IMR-90 (cell line): ENCODE measurements at regions of chr1 and their contacts with region 1.

Region 1: GRCh38 chr1:172745014-172745413 is 86.1 kb downstream of the FASLG start:
- DNase-seq: peak; percentile 89
- ATAC-seq: peak; percentile 69
- H3K4me3 ChIP-seq: no peak overlapping the region
- H3K27ac ChIP-seq: no peak overlapping the region
- H3K4me1 ChIP-seq: peaks cover 7% of the 10 kb centered on the region
- H3K27me3 ChIP-seq: no peaks in the 10 kb centered on the region; the same call in 1 of the 2 replicates
- CTCF ChIP-seq: peak; percentile 85
- POLR2A ChIP-seq: peak; percentile 48; the same call in 1 of the 2 replicates
- RAD21 ChIP-seq: peak; percentile 94

Region 2: GRCh38 chr1:172708452-172708851 is 36.6 kb before region 1 on chr1:
- CTCF ChIA-PET with region 1: no interaction called
- POLR2A ChIA-PET with region 1: no interaction called
- dilution Hi-C with region 1: no loop called
- in situ Hi-C with region 1: no loop called
- intact Hi-C with region 1: no loop called
- DNase-seq: no peak
- ATAC-seq: no peak
- H3K4me3 ChIP-seq: no peak overlapping the region
- H3K27ac ChIP-seq: no peak overlapping the region
- H3K4me1 ChIP-seq: no peaks in the 10 kb centered on the region
- H3K27me3 ChIP-seq: no peaks in the 10 kb centered on the region
- CTCF ChIP-seq: no peak
- POLR2A ChIP-seq: no peak
- RAD21 ChIP-seq: no peak

Region 3: GRCh38 chr1:172835834-172836233 is 90.8 kb after region 1 on chr1:
- CTCF ChIA-PET with region 1: no interaction called
- POLR2A ChIA-PET with region 1: no interaction called
- dilution Hi-C with region 1: no loop called
- in situ Hi-C with region 1: no loop called
- intact Hi-C with region 1: no loop called
- DNase-seq: no peak
- ATAC-seq: no peak
- H3K4me3 ChIP-seq: no peak overlapping the region
- H3K27ac ChIP-seq: no peak overlapping the region
- H3K4me1 ChIP-seq: peaks cover 7% of the 10 kb centered on the region; the same call in 1 of the 2 replicates
- H3K27me3 ChIP-seq: no peaks in the 10 kb centered on the region
- CTCF ChIP-seq: no peak
- POLR2A ChIP-seq: no peak
- RAD21 ChIP-seq: no peak

Region 4: DNA sequence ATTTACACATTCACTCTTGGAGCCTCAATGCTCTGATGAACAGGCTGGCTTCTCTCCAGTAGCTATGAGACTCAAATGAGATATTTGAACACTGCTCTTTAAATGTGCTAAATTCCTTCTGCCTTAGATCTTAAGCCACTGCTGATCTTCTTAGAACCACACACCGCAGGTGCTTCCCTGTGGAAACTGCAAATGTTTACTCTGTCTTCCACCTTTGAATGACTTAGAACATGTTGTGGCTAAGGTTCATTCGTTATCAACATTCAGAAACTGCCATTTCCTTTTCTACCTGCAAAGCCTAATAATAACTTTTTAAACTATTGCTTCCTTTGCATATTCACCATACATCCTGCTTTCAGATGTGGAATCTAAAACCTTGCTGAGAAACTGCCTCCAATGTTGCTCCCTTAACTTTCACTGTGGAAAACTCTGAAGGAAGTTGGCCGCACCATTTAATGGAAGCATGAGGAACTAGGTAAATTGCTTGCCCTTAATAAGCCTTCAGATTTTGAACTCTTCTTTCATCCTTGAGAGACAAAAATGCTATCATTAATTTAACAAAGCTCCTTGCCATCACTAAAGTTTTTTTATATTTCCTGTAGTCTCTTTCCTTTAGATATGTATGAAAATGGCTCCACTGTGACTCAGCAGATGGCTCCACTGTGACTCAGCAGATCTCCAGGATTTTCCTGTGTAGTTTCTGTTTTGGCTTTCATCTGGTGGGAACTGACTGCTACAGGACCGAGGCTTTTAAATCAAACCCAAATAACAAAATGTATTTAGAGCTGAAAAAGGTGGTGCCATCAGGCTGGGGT is 162.0 kb after region 1 on chr1:
- CTCF ChIA-PET with region 1: interaction called, 4 read pairs
- POLR2A ChIA-PET with region 1: no interaction called
- dilution Hi-C with region 1: no loop called
- in situ Hi-C with region 1: no loop called
- intact Hi-C with region 1: loop called (anchors 5 kb)
- DNase-seq: peak; percentile 93
- ATAC-seq: 0 out of 2 replicates have a peak, but pooled peaks have one; percentile 3
- H3K4me3 ChIP-seq: no peak overlapping the region
- H3K27ac ChIP-seq: peak overlapping the region; percentile 67
- H3K4me1 ChIP-seq: peaks cover 23% of the 10 kb centered on the region
- H3K27me3 ChIP-seq: no peaks in the 10 kb centered on the region
- CTCF ChIP-seq: no peak
- POLR2A ChIP-seq: 0 out of 2 replicates have a peak, but pooled peaks have one; percentile 22
- RAD21 ChIP-seq: no peak

Region 5: GRCh38 chr1:173122958-173123852 is 378.2 kb after region 1 on chr1:
- CTCF ChIA-PET with region 1: no interaction called
- POLR2A ChIA-PET with region 1: no interaction called
- dilution Hi-C with region 1: no loop called
- in situ Hi-C with region 1: no loop called
- intact Hi-C with region 1: loop called (anchors 1 kb)
- DNase-seq: peak; percentile 95
- ATAC-seq: peak; percentile 85
- H3K4me3 ChIP-seq: peak overlapping the region; percentile 27
- H3K27ac ChIP-seq: peak overlapping the region; percentile 87
- H3K4me1 ChIP-seq: peaks cover 8% of the 10 kb centered on the region
- H3K27me3 ChIP-seq: no peaks in the 10 kb centered on the region
- CTCF ChIP-seq: no peak
- POLR2A ChIP-seq: no peak
- RAD21 ChIP-seq: peak; percentile 9; the same call in 1 of the 2 replicates

Region 6: DNA sequence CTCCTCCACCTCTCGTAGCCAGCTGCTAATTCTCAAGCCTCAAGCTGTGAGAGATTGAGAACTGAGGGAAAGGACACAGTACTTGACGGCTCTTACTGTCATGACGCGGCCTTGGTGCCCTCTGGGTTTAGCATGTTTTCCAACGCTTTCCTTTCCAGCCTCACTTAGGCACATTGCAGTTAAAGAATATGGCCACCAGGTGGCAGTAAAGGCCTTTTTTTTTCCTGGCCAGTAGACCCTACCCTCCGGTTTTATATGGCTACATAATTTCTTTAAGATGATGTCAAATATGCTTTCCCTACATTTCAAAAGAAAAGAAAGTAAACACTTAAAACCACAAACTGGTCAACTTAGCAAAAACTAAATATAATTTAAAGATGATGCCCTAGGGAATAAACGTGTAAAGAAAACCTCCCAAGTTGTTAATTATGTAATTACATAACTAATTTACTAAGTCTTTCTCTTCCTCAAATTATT is 675.4 kb after region 1 on chr1:
- CTCF ChIA-PET with region 1: interaction called, 3 read pairs
- POLR2A ChIA-PET with region 1: no interaction called
- dilution Hi-C with region 1: no loop called
- in situ Hi-C with region 1: loop called (anchors 5 kb)
- intact Hi-C with region 1: loop called (anchors 1 kb)
- DNase-seq: peak; percentile 83
- ATAC-seq: peak; percentile 98
- H3K4me3 ChIP-seq: no peak overlapping the region
- H3K27ac ChIP-seq: peak overlapping the region; percentile 40; the same call in 1 of the 2 replicates
- H3K4me1 ChIP-seq: peaks cover 3% of the 10 kb centered on the region; the same call in 1 of the 2 replicates
- H3K27me3 ChIP-seq: no peaks in the 10 kb centered on the region
- CTCF ChIP-seq: peak; percentile 85
- POLR2A ChIP-seq: no peak
- RAD21 ChIP-seq: peak; percentile 85

Region 7: DNA sequence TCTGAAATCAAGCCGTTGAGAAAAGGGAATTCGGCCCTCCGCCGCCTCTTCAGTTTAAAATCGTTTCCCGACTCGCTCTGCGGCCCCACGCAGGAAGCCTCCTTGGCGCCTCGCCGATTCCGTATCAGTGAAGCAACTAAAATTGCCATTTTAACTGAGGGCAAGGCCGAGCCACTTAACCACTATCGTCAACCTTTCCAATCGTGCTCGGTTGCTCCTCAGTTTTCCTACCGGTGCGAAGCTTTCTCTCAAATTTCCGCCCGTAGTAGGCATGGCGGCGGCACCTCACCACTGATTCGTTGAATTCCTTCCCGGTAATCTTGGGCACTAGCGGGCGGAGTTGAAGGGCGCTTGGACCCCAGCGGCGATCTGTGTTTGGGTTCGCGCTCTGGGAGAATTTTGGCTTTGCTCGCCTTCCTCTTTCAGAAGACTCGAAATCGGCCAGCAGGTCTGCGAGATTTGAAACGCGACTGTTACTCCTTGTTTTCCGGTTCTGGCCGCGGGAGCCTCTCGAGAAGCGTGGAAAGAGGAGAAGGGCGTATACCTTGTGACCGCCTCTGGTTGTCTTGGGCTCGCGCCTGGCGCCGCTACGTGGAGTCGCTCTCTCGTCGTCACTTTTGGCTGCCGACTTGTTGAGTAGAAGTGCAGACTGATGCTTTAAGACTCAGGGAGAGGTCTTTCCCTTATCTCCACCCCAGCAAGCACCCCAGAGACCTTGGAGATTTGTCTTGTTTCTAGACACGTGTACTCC is 1079.5 kb after region 1 on chr1 and contains the starts of genes CENPL and DARS2:
- CTCF ChIA-PET with region 1: no interaction called
- POLR2A ChIA-PET with region 1: no interaction called
- dilution Hi-C with region 1: no loop called
- in situ Hi-C with region 1: loop called (anchors 10 kb)
- intact Hi-C with region 1: loop called (anchors 1 kb)
- DNase-seq: peak; percentile 98
- ATAC-seq: peak; percentile 97
- H3K4me3 ChIP-seq: peak within 1 kb of the TSS; percentile 65
- H3K27ac ChIP-seq: peak within 1 kb of the TSS; percentile 84
- H3K4me1 ChIP-seq: peaks cover 2% of the 10 kb centered on the region; the same call in 1 of the 2 replicates
- H3K27me3 ChIP-seq: no peaks in the 10 kb centered on the region
- CTCF ChIP-seq: no peak
- POLR2A ChIP-seq: peak; percentile 86; the same call in 1 of the 2 replicates
- RAD21 ChIP-seq: no peak
- total RNA-seq, gene CENPL: 21.1 and 21.9 TPM in 2 replicates
- total RNA-seq, gene DARS2: 18.8 and 22.8 TPM in 2 replicates

Region 8: DNA sequence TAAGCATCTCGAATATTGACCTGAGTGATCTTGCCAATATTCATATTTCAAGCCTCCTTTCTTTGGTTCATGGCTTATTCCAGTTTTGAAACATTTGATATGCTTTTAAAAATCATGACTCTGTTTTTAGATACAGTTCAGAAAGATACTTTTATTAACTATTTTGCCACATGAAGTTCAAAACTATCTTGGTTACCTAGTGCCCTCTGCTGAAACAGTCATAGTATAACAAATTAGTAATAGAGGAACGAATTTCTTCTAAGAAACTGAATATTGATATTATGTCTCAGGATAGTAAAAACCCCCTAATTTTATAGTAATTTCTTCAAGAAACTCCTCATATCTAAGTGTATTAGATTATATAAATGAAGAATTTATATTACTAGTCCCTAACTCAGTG is 1329.7 kb after region 1 on chr1:
- CTCF ChIA-PET with region 1: no interaction called
- POLR2A ChIA-PET with region 1: no interaction called
- dilution Hi-C with region 1: no loop called
- in situ Hi-C with region 1: loop called (anchors 10 kb)
- intact Hi-C with region 1: loop called (anchors 5 kb)
- DNase-seq: peak; percentile 55
- ATAC-seq: peak; percentile 76
- H3K4me3 ChIP-seq: no peak overlapping the region
- H3K27ac ChIP-seq: no peak overlapping the region
- H3K4me1 ChIP-seq: no peaks in the 10 kb centered on the region
- H3K27me3 ChIP-seq: no peaks in the 10 kb centered on the region
- CTCF ChIP-seq: peak; percentile 64
- POLR2A ChIP-seq: no peak
- RAD21 ChIP-seq: peak; percentile 72